HCT116 (cell line): ENCODE measurements at regions of chr3 and their contacts with region 1.

Region 1: DNA sequence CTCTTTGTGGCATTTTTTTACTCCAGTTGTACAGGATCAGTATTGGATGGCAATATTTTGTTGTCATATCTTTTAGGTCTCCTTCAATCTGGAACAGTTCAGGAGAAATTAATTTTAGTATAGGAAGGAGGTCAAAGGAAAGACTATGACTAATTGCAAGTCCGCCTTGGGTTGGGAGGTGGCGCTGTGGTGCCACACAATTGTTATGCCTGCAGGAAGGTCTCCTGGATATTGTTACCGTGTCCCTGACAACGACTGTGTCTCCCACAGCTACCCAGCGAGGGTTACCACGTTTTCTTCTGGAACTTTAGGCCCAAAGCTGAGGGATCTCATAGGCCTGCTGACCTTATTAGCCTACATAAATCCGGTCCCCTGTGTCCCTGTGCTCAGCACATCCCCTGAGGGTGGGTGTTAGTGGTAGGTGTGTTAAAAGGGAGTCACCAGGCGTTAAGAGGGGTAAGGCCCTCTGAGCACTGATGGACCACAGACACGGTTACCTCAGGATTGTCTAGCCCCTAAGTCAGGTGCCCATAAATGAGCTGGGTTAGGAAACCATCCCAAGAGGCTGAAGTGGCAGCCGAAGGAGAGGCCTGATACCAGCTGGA is 31.5 kb downstream of the KCNAB1 start:
- DNase-seq: peak; percentile 60
- ATAC-seq: peak; percentile 94
- H3K4me3 ChIP-seq: no peak overlapping the region
- H3K27ac ChIP-seq: no peak overlapping the region
- H3K4me1 ChIP-seq: peaks cover 0 to 3% of the 10 kb centered on the region in 2 experiments; a peak in 1 of 4 replicates
- H3K27me3 ChIP-seq: no peaks in the 10 kb centered on the region
- CTCF ChIP-seq: peak; percentile 82 to 93 (median 87)
- POLR2A ChIP-seq: no peak
- RAD21 ChIP-seq: peak; percentile 94

Region 2: DNA sequence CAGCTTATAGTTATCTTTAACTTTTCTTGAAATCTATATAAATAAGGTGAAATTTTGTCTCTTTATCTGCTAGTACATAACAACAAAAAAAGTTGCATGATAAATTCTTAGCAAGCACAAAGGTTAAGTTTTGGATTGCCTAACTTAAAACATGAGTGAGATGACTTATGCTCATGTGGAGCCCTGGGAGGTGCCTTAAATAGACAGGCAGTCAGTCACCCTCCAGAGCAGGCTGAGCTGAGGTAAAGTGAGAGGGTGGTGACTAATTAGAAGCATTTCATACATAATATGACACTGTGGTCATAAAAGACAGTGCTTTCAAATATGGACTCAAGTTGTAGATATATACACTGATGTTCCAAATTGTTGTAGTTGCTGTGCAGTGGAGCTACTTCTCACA is 1086.4 kb before region 1 on chr3:
- CTCF ChIA-PET with region 1: no interaction called
- POLR2A ChIA-PET with region 1: no interaction called
- RAD21 ChIA-PET with region 1: no interaction called
- intact Hi-C with region 1: no loop called
- DNase-seq: no peak
- ATAC-seq: 0 out of 2 replicates have a peak, but pooled peaks have one; percentile 50
- H3K4me3 ChIP-seq: no peak overlapping the region
- H3K27ac ChIP-seq: no peak overlapping the region
- H3K4me1 ChIP-seq: no peaks in the 10 kb centered on the region
- H3K27me3 ChIP-seq: no peaks in the 10 kb centered on the region
- CTCF ChIP-seq: no peak
- POLR2A ChIP-seq: no peak
- RAD21 ChIP-seq: no peak

Region 3: DNA sequence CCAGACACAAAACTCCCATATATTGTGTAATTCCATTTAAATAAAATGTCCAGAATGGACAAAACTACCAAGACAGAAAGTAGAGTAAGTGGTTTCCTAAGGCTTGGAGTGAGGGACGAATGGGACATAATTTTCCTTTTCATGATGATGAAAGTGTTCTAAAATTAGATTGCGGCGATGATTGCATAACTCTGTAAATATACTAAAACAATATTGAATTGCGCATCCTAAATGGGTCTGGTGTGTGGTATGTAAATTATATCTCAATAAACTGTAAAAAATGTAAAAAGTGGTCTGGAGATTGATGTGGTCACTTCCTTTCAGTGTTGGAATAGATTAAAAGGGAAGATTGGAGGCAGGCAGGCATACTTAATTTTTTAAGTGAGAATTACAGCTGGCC is 137.4 kb before region 1 on chr3:
- CTCF ChIA-PET with region 1: interaction called, 9 read pairs
- POLR2A ChIA-PET with region 1: no interaction called
- RAD21 ChIA-PET with region 1: no interaction called
- intact Hi-C with region 1: loop called (anchors 2 kb)
- DNase-seq: no peak
- ATAC-seq: no peak
- H3K4me3 ChIP-seq: no peak overlapping the region
- H3K27ac ChIP-seq: no peak overlapping the region
- H3K4me1 ChIP-seq: no peaks in the 10 kb centered on the region
- H3K27me3 ChIP-seq: no peaks in the 10 kb centered on the region
- CTCF ChIP-seq: no peak
- POLR2A ChIP-seq: no peak
- RAD21 ChIP-seq: no peak

Region 4: DNA sequence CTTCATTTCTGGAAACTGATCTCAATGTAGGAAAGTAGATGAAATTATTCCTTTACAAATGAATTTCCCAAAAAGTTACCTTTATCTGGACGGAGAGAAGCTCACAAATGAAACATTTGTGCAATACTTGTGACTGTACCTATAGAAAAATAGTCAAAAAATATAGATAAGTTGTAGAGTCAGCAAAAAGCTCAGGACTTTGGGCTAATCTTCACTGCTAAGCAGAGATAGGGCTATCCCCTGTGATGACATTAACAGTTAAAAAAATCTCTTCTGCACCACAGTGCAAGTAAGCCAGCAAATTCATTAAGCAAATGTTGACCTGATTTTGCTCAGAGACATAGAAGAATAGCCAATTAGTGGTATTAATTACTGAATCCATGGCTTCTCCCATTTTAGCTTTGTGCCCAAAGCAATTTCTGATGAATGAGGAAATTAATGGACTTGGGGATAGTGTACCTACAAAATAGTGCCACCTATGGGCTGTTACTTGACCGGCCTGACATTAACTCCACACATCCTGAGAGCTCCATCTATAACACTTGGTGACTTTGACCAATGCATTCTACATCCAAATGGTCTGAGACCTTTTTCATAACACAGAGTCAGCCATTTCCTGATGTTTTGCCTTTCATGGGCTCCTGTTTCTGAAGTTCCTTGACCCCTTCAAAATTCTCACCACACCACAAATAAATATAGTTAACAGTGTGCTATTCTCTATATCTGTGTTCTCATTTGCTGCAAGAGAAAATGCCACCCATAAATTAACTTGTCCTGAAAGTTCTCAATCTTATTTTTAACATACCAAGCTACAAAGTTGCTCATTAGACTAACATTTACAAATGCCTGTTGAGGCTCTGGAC is 298.0 kb after region 1 on chr3:
- CTCF ChIA-PET with region 1: interaction called, 32 read pairs
- POLR2A ChIA-PET with region 1: no interaction called
- RAD21 ChIA-PET with region 1: no interaction called
- intact Hi-C with region 1: loop called (anchors 2 kb)
- DNase-seq: peak; percentile 37
- ATAC-seq: peak; percentile 91
- H3K4me3 ChIP-seq: no peak overlapping the region
- H3K27ac ChIP-seq: no peak overlapping the region
- H3K4me1 ChIP-seq: no peaks in the 10 kb centered on the region
- H3K27me3 ChIP-seq: no peaks in the 10 kb centered on the region
- CTCF ChIP-seq: peak; percentile 47 to 74 (median 68); a peak in 5 of 6 replicates
- POLR2A ChIP-seq: no peak
- RAD21 ChIP-seq: peak; percentile 61

Region 5: DNA sequence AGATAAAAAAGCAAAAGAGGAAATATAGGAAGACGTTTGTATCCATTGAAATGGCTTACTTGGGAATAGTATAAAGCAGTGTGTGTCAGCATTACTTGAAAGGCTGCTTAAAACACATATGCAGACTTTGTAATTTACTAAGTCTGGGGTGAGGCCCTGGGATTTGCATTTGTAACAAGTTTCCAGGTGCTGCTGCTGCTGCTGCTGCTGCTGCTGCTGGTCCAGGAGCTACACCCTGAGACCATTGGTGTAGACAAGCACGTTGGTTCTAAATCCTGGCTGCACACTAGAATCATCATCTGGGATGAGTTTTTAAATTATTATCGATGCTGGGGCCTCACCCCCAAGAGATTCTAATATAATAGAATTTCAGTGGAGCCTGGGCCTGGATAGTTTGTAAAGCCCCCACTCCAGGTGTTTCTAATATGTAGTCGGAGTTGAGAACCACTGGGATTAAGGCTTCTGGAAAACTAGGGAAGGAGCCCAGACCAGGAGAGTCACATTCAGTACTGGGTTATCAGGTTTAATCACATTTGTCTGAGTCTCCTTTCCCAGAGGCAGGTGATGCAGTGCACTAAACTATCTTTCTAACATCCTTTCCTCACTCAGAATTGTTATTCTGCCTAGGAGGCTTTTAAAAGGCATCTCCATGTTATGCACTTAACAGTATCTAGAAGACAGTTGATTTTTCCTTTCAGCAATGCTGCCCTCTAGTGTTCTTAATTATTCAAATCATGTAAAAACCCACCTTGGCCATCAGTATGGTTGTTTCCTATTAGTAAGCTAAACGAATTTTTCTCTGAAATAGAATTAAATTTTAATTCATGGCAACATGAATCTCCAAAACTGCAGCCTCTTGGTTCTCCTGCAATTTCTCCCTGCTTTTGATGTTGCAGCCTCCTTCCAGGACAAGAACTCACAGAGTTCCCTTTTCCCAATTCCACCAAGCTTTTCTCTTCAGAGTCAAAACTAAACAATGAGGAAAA is 357.6 kb after region 1 on chr3:
- CTCF ChIA-PET with region 1: interaction called, 62 read pairs
- POLR2A ChIA-PET with region 1: no interaction called
- RAD21 ChIA-PET with region 1: interaction called, 3 to 4 read pairs
- intact Hi-C with region 1: loop called (anchors 1 kb)
- DNase-seq: peak; percentile 37
- ATAC-seq: peak; percentile 91
- H3K4me3 ChIP-seq: no peak overlapping the region
- H3K27ac ChIP-seq: no peak overlapping the region
- H3K4me1 ChIP-seq: peaks cover 4 to 6% of the 10 kb centered on the region in 2 experiments; a peak in 2 of 4 replicates
- H3K27me3 ChIP-seq: no peaks in the 10 kb centered on the region
- CTCF ChIP-seq: peak; percentile 30 to 81 (median 69); a peak in 5 of 6 replicates
- POLR2A ChIP-seq: no peak
- RAD21 ChIP-seq: peak; percentile 83

Region 6: GRCh38 chr3:156674046-156674910 is 522.4 kb after region 1 on chr3 and contains the start of gene TIPARP:
- CTCF ChIA-PET with region 1: interaction called, 3 read pairs
- POLR2A ChIA-PET with region 1: no interaction called
- RAD21 ChIA-PET with region 1: no interaction called
- intact Hi-C with region 1: loop called (anchors 2 kb)
- DNase-seq: peak; percentile 94
- ATAC-seq: peak; percentile 86
- H3K4me3 ChIP-seq: peak within 1 kb of the TSS; percentile 70 to 89
- H3K27ac ChIP-seq: peak within 1 kb of the TSS; percentile 83
- H3K4me1 ChIP-seq: peaks cover 12 to 19% of the 10 kb centered on the region in 2 experiments
- H3K27me3 ChIP-seq: no peaks in the 10 kb centered on the region
- CTCF ChIP-seq: peak; percentile 61 to 97 (median 66)
- POLR2A ChIP-seq: peak; percentile 97
- RAD21 ChIP-seq: peak; percentile 84
- total RNA-seq, gene TIPARP: 51.3 TPM

Region 7: DNA sequence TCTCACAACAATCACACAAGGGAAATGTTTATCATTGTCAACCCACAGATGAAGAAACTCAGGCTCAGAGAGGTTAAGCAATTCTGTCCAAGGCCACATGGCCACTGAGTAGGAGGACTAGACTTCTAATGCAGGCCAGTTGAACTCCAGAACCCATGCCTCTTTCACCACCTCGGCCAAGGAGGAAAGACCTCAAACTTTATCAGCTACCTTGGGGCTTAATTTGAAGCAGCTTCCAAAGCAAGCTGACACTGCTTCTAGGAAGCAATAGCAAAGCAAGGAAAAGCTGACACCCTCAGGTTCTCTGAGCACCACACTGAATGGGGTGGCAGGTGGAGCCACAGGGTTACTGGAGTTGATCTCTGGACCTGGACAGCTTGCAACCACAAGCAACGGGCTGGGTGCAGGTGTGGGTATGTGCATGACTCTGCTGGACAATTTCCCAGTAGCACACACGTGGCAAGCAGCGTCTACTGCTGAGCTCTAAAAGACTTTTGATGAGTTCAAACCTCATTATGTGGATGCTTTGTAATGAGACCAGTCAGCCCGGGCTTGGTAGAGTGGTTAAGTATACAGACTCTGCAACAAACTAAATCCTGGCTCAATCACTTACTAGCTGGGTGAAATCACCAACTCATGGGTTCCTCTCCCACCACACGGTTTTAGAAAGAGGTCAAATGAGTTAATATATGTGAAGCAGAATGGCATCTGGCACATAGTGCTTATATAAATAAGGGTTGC is 984.9 kb after region 1 on chr3:
- CTCF ChIA-PET with region 1: interaction called, 4 read pairs
- POLR2A ChIA-PET with region 1: no interaction called
- RAD21 ChIA-PET with region 1: interaction called, 3 to 4 read pairs
- intact Hi-C with region 1: loop called (anchors 2 kb)
- DNase-seq: no peak
- ATAC-seq: peak; percentile 42
- H3K4me3 ChIP-seq: no peak overlapping the region
- H3K27ac ChIP-seq: no peak overlapping the region
- H3K4me1 ChIP-seq: peaks cover 3 to 43% of the 10 kb centered on the region in 2 experiments
- H3K27me3 ChIP-seq: no peaks in the 10 kb centered on the region
- CTCF ChIP-seq: no peak
- POLR2A ChIP-seq: no peak
- RAD21 ChIP-seq: no peak